PC-9 (cell line): ENCODE measurements at regions of chr17 and their contacts with region 1.

Region 1: DNA sequence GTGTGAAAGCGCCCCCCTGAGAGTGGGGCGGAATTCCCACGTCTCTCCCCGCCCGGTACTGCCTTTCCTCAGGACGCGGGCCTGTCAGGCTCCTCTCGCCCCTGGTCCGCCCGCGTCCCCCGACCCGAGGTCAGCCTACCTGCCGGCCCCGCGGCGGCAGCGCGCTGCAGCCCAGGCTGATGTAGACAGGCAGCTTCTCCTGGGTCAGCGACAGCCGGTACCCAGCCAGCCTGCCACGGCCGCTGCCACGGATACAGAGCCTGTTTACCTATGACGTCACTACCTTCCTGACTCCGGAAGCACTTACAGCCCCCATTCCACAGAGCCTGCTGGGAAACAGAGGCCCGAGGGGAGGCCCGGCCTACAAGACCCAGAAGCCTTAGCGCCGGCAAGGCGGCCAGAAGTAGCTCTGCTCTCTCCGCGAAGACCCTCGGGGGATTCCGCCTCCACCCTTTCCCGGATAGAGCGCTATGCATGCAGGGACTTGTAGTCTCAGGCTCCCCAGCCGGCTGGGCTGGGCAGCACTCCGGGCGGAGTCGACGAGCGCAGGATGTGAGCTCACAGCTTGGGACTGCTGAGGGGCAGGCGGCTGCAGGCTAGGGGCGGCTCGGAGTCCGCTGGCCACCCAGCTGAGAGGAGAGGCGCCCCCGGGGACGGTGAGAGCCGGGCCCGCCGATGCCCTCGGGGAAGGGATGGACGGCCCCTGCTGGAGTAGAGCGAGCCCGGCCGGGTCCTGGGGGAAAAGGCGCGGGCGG is at the starts of genes IFT20 and TNFAIP1:
- DNase-seq: peak; percentile 99
- H3K4me3 ChIP-seq: peak within 1 kb of the TSS; percentile 87
- H3K27ac ChIP-seq: peak within 1 kb of the TSS; percentile 76
- H3K4me1 ChIP-seq: peaks cover 22% of the 10 kb centered on the region
- H3K27me3 ChIP-seq: no peaks in the 10 kb centered on the region
- CTCF ChIP-seq: no peak
- total RNA-seq, gene IFT20: 35.3 and 42.3 TPM in 2 replicates
- total RNA-seq, gene TNFAIP1: 46.8 and 48.8 TPM in 2 replicates

Region 2: GRCh38 chr17:27630607-27631410 is 704.6 kb before region 1 on chr17 and contains the start of gene LGALS9:
- CTCF ChIA-PET with region 1: no interaction called
- POLR2A ChIA-PET with region 1: no interaction called
- intact Hi-C with region 1: no loop called
- DNase-seq: peak; percentile 62 to 66
- H3K4me3 ChIP-seq: no peak within 1 kb of the TSS
- H3K27ac ChIP-seq: no peak within 1 kb of the TSS
- H3K4me1 ChIP-seq: no peaks in the 10 kb centered on the region
- H3K27me3 ChIP-seq: no peaks in the 10 kb centered on the region
- CTCF ChIP-seq: no peak
- total RNA-seq, gene LGALS9: 11.2 and 14.5 TPM in 2 replicates

Region 3: DNA sequence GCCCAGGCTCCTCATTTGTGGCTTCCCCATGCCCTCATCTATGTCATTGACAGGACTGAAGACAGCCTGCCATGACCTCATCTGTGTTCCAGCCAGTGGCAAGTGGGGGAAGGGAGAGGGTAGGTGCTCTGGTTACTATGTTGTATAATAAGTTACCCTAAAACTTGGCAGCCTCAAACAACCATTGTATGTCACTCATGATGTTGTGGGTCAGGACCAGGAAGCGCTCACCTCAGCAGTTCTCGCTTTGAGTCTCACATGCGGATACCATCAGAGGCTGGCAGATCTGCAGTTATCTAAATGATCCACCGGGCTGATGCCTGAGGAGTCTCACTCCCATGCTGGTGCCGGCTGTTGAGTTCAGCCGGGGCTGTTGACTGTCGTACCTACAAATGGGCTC is 105.4 kb before region 1 on chr17:
- CTCF ChIA-PET with region 1: no interaction called
- POLR2A ChIA-PET with region 1: interaction called, 9 read pairs
- intact Hi-C with region 1: loop called (anchors 5 kb)
- DNase-seq: no peak
- H3K4me3 ChIP-seq: no peak overlapping the region
- H3K27ac ChIP-seq: no peak overlapping the region
- H3K4me1 ChIP-seq: peaks cover 21% of the 10 kb centered on the region
- H3K27me3 ChIP-seq: no peaks in the 10 kb centered on the region
- CTCF ChIP-seq: no peak

Region 4: GRCh38 chr17:28306954-28307401 is 28.4 kb before region 1 on chr17:
- CTCF ChIA-PET with region 1: no interaction called
- POLR2A ChIA-PET with region 1: interaction called, 11 read pairs
- intact Hi-C with region 1: no loop called
- DNase-seq: no peak
- H3K4me3 ChIP-seq: no peak overlapping the region
- H3K27ac ChIP-seq: no peak overlapping the region
- H3K4me1 ChIP-seq: no peaks in the 10 kb centered on the region
- H3K27me3 ChIP-seq: no peaks in the 10 kb centered on the region
- CTCF ChIP-seq: no peak

Region 5: DNA sequence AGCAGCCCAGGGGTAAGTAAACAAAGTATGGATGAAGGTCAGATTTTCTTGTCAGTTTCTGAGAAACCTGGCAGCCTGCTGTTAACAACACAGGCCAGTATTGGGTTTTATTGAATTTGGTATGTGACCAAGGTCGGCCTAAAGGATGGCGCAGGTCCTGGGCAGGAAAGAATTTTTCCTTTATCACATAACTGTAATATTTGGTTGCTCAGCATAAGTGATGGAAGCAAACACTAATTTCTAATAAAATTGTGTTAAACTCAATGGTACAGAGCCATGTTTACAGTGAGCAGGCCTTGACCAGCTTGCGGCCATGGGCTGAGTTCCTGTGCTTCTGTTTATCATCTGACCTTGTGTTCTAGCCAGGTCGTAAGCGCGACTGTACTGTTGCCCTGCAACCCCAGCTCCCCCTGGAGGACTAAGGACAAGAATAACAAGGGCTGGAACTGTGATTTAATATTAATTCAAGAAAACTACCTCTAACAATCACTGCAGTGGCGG is 11.4 kb after region 1 on chr17:
- CTCF ChIA-PET with region 1: interaction called, 6 read pairs
- POLR2A ChIA-PET with region 1: interaction called, 42 read pairs
- intact Hi-C with region 1: loop called (anchors 1 kb)
- DNase-seq: no peak
- H3K4me3 ChIP-seq: no peak overlapping the region
- H3K27ac ChIP-seq: peak overlapping the region; percentile 72
- H3K4me1 ChIP-seq: peaks cover 26% of the 10 kb centered on the region
- H3K27me3 ChIP-seq: no peaks in the 10 kb centered on the region
- CTCF ChIP-seq: peak; percentile 35; the same call in 1 of the 2 replicates

Region 6: DNA sequence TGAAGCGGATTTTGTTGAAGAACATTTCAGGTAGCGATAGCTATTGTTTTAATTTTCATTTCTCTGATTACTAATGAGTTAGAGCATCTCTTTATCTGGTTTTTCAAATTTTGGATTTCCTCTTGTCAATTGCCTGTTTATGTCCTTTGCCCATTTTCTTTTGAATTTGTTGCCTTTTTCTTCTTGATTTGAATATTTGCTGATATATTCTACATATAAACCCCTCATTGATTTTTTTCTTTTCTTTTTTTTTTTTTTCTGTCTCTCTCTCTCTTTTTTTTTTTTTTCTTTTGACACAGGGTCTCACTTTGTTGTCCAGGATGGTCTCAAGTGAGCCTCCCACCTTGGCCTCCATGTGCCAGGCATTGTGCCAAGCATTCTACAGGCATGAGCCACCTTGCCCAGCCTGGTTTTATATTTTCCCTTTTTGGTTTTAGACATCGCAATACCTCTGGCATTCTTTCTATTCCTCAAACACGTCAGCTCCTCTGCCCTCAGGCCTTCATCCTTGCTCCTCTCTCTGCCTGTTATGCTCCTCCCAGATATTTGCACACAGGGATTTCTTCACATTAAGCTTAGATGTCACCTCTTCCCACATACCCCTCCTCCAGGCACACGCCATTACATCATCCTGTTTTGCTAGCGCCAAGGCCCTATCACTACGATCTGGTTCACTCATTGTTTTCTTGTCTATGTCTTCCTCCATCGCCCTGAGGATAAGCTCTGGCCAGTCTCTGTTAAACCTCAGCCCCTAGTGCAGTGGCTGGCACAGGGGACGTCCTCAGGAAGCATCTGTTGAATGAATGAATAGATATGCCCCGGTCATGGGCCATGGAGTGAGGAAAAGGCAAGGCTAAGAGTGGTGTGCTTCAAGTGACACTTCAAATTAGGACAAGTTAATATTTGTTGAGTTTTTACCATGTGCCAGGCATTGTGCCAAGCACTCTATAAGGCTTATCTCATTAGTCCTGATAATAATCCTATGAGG is 44.7 kb after region 1 on chr17:
- CTCF ChIA-PET with region 1: interaction called, 3 read pairs
- POLR2A ChIA-PET with region 1: interaction called, 8 read pairs
- intact Hi-C with region 1: loop called (anchors 1 kb)
- DNase-seq: peak; percentile 80 to 97
- H3K4me3 ChIP-seq: no peak overlapping the region
- H3K27ac ChIP-seq: peak overlapping the region; percentile 86
- H3K4me1 ChIP-seq: peaks cover 26% of the 10 kb centered on the region
- H3K27me3 ChIP-seq: no peaks in the 10 kb centered on the region
- CTCF ChIP-seq: no peak

Region 7: DNA sequence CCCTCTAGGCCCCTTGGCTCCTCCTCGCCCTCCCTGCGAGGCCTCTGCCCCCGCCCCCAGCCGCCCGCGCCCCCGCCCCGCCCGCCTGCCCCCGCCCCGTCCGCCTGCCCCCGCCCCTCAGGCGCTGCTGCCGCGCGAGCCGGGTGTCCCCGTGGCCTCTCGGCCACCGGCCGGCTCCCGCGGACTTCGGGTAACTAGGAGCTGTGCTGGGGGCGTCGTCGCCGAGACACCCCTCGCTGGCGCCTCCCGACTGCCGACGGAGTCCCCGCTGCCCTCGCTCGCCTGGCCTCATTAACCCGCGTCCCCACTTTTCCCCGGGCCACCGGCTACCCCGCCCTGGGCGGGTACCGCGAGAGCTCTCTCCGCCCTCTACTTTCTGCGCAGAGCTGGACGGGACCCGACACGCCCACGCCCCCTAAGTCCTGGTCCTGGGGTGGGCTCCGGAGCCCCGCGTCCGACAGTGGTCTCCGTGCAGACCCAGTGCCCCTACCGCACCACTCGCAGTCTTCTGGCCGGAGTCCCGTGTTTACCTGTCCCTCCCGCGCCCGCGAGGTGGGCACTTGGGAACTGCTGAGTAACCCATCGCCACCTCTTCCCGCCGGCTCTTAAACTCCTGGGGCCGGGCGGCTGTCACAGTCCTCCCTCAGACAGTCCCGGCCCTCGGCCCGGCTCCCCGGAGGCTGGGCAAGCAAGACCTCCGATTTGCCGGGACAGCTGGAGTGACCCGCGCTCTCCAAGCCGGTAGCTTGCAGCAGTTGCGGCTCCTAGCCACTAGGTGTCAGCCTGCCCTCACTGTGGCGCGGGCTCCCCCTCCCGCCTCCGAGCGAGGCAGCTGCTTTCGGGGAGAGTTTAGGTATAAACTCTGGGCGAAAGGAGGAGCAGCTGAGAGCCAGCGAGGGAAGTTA is 391.1 kb after region 1 on chr17 and contains the start of gene TLCD1:
- CTCF ChIA-PET with region 1: interaction called, 11 read pairs
- POLR2A ChIA-PET with region 1: no interaction called
- intact Hi-C with region 1: no loop called
- DNase-seq: peak; percentile 89 to 96
- H3K4me3 ChIP-seq: peak within 1 kb of the TSS; percentile 87
- H3K27ac ChIP-seq: peak within 1 kb of the TSS; percentile 97
- H3K4me1 ChIP-seq: peaks cover 50% of the 10 kb centered on the region
- H3K27me3 ChIP-seq: no peaks in the 10 kb centered on the region
- CTCF ChIP-seq: peak; percentile 98
- total RNA-seq, gene TLCD1: 14.7 and 19.4 TPM in 2 replicates

Region 8: DNA sequence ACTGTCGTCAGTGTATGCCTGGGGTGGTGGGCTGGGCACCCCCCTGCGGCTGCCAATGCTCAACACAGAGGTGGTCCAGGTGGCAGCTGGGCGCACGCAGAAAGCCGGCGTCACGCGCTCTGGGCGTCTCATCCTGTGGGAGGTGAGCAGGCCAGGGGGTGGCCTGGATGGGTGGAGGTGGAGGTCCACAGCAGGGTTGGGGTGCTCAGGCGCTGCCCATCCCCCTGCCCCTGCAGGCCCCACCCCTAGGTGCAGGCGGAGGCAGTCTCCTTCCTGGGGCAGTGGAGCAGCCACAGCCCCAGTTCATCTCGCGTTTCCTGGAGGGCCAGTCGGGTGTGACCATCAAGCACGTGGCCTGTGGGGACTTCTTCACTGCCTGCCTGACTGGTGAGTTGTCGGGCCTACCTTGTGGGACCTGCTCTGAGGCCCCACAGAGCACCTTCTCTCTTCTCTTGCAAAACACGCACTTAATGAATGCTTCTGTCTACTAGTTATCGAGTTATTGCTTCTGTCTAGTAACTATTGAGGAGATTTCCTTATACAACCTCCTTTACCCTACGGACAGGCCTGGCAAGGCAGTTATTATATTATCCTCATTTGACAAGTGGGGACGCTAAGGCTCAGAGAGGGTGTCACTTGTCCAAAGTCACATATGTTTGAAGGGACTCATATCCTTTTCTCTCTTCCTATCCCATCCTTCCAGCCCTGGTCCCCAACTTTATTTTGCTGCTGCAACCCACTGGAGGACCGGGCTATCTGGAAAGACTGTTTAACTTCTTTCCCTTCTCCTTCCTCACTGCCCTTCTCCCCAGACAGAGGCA is 402.7 kb after region 1 on chr17:
- CTCF ChIA-PET with region 1: no interaction called
- POLR2A ChIA-PET with region 1: no interaction called
- intact Hi-C with region 1: no loop called
- DNase-seq: peak in 1 of 2 experiments; percentile 64
- H3K4me3 ChIP-seq: no peak overlapping the region
- H3K27ac ChIP-seq: no peak overlapping the region
- H3K4me1 ChIP-seq: peaks cover 37% of the 10 kb centered on the region
- H3K27me3 ChIP-seq: no peaks in the 10 kb centered on the region
- CTCF ChIP-seq: no peak